ENCODE measurements at regions of chr1 and their contacts with region 1.

Region 1: DNA sequence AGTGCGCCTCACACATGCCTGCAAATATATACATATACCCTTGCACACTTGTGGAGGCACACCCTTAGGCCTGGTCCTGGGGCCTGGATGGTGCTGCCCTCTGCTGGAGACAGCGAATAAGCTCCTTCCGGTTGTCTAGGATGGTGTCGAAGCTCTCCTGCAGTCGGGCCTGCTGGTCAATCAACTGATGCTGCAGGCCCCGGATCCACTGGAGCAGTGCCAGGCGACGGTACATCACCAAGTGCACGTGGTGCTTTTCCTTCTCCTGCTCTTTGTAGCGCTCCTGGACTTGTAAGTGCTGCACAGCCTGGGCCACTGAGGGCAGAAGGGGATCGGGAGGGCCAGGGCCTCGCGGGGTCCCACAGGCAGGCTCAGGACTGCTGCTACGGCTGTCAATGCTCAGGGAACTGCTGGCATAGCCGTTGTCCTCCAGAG is 3.1 kb downstream of the C1orf216 start:
- DNase-seq: peak in 1 of 2 experiments; percentile 88
- H3K4me3 ChIP-seq: no peak overlapping the region
- H3K27ac ChIP-seq: no peak overlapping the region
- H3K4me1 ChIP-seq: peaks cover 3 to 9% (median 4%) of the 10 kb centered on the region in 4 experiments; a peak in 6 of 7 replicates
- H3K27me3 ChIP-seq: no peaks in the 10 kb centered on the region
- CTCF ChIP-seq: peak; percentile 89 to 95 (median 93)
- EP300 ChIP-seq: no peak
- POLR2A ChIP-seq: no peak
- RAD21 ChIP-seq: peak; percentile 85 to 91

Region 2: DNA sequence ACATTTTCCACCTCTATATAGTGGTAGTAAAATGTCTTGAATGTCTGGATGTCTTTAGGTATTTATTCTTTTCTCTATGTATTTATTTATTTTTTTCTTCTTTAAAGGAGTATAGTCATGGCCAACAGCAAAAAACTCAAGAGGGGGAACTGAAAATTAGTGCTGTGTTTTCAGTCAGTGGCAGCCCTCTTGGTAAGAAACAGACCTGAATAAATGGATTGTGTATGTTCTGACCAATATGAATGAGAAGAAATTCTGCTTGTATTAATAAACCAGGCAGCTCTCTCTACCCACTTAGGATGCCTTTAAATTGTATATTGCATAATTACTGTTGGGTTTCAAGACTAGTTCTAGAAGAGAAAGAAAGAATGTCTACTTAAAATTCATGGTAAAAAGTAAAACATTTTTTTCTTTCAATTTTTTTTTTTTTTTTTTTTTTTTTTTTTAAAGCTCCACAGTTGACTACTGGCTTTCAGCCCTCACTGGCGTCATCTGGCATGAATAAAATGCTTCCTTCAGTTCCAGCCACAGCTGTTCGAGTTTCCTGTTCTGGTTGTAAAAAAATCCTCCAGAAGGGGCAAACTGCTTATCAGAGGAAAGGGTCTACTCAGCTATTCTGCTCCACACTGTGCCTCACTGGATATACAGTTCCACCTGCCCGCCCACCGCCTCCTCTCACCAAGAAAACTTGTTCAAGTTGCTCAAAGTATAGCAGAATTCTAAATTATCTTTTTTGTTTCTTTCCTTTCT is 345.5 kb before region 1 on chr1:
- CTCF ChIA-PET with region 1: no interaction called
- POLR2A ChIA-PET with region 1: no interaction called
- DNase-seq: no peak
- H3K4me3 ChIP-seq: no peak overlapping the region
- H3K27ac ChIP-seq: no peak overlapping the region
- H3K4me1 ChIP-seq: no peaks in the 10 kb centered on the region
- H3K27me3 ChIP-seq: no peaks in the 10 kb centered on the region
- CTCF ChIP-seq: no peak
- EP300 ChIP-seq: no peak
- POLR2A ChIP-seq: no peak
- RAD21 ChIP-seq: no peak

Region 3: GRCh38 chr1:35577071-35577998 is 138.2 kb before region 1 on chr1:
- CTCF ChIA-PET with region 1: interaction called, 81 read pairs
- POLR2A ChIA-PET with region 1: interaction called, 7 read pairs
- DNase-seq: peak in 1 of 2 experiments; percentile 79
- H3K4me3 ChIP-seq: peak overlapping the region; percentile 30 to 58 (median 46)
- H3K27ac ChIP-seq: no peak overlapping the region
- H3K4me1 ChIP-seq: peaks cover 7 to 20% (median 15%) of the 10 kb centered on the region in 4 experiments
- H3K27me3 ChIP-seq: peaks cover 60 to 69% (median 67%) of the 10 kb centered on the region in 4 experiments
- CTCF ChIP-seq: no peak
- EP300 ChIP-seq: no peak
- POLR2A ChIP-seq: no peak
- RAD21 ChIP-seq: no peak

Region 4: DNA sequence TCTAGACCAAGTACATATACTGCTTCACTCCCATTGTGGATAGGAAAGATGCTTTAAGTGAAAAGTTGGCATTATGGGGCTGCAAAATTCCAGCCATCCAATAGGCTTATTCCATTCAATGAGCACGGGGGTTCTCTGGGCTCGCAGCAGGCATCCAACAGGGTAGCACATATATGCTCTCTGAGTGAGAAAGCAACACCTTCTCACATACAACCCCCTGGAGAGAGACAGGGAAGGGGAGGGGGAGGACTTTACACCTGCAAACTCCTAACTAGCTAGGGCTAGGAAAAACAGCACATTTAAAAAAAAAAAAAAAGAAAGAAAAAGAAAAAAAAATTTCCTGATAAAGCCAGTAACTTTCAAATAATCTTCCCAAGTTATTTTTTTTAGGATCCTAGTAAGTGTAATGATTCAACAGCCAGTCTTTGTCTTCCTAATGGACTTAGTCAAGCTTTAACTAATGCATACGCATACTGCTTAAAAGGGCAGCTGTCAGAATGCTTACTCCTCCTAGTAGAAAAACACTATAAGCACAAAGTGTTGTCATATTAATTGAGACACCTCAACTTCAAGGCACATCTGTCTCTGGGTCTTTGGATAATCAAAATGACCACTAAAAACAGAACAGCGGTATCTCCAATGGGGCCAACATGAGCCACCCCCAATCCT is 92.9 kb before region 1 on chr1:
- CTCF ChIA-PET with region 1: interaction called, 20 read pairs
- POLR2A ChIA-PET with region 1: no interaction called
- DNase-seq: no peak
- H3K4me3 ChIP-seq: no peak overlapping the region
- H3K27ac ChIP-seq: no peak overlapping the region
- H3K4me1 ChIP-seq: peaks cover 7 to 17% (median 13%) of the 10 kb centered on the region in 4 experiments
- H3K27me3 ChIP-seq: no peaks in the 10 kb centered on the region
- CTCF ChIP-seq: no peak
- EP300 ChIP-seq: no peak
- POLR2A ChIP-seq: no peak
- RAD21 ChIP-seq: no peak

Region 5: DNA sequence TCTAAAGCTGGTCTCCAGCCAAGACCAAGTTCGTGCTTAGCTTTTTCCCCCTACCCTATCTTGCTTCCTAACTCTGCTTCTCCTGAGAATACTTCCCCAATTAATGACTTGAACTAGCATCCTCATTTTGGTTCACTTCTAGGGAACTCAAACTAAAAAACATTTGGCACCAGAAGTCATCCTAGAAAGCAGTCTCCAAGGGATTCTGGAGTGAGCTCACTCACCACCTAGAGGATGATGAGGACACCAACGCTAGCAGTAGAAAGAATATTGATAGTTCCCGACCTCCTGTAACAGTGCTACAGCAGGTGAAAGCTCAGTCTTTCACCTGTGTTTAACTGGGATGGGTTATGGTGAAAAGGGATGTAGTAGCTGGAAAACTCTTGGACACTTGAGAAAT is 69.5 kb before region 1 on chr1:
- CTCF ChIA-PET with region 1: interaction called, 26 read pairs
- POLR2A ChIA-PET with region 1: interaction called, 3 read pairs
- DNase-seq: no peak
- H3K4me3 ChIP-seq: no peak overlapping the region
- H3K27ac ChIP-seq: no peak overlapping the region
- H3K4me1 ChIP-seq: no peaks in the 10 kb centered on the region
- H3K27me3 ChIP-seq: no peaks in the 10 kb centered on the region
- CTCF ChIP-seq: peak in 2 of 3 experiments; percentile 23 to 48; a peak in 1 of 4 replicates
- EP300 ChIP-seq: no peak
- POLR2A ChIP-seq: no peak
- RAD21 ChIP-seq: peak; percentile 32 to 48

Region 6: DNA sequence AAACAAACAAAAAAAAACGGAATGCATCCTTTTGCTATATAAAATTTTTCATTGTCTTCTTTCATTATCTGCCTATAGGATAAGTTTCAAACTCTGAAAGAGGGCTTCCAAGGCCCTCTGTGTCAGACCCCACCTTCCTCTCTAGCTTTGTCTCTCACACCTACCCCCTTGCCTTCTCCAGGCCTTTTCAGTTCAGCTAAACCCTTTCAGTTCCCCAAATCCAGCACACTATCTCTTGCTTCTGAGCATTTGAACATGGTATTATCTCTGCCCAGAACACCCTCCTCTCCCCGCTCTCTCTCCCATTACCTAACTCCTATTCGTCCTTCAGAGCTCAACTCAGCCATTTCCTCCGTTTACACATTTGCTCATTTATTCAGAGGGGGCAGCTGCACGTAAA is 32.6 kb before region 1 on chr1:
- CTCF ChIA-PET with region 1: interaction called, 18 read pairs
- POLR2A ChIA-PET with region 1: no interaction called
- DNase-seq: no peak
- H3K4me3 ChIP-seq: no peak overlapping the region
- H3K27ac ChIP-seq: no peak overlapping the region
- H3K4me1 ChIP-seq: no peaks in the 10 kb centered on the region
- H3K27me3 ChIP-seq: no peaks in the 10 kb centered on the region
- CTCF ChIP-seq: no peak
- EP300 ChIP-seq: no peak
- POLR2A ChIP-seq: no peak
- RAD21 ChIP-seq: no peak

Region 7: DNA sequence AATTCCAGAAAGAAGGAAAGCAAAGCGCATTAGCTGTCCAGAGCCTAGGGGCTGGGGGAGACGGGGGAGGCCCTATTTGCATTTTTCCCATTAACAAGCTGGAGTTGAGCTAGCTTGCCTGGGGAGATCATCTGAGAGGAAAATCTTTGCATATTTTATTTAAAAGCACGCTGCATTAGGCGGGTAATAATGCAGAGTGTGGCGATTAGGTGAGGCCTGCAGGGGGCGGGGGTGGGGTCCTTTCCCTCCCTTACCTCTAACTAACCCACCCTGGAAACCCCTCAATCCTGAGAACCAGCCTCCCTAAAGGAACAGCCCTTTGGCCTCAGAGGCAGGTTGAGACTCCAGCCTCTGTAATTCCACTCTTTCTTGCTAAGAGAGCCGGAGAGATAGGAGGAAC is 13.1 kb before region 1 on chr1:
- CTCF ChIA-PET with region 1: interaction called, 115 read pairs
- POLR2A ChIA-PET with region 1: interaction called, 41 read pairs
- DNase-seq: no peak
- H3K4me3 ChIP-seq: peak overlapping the region in 3 of 4 experiments; percentile 13 to 45 (median 32); a peak in 3 of 8 replicates
- H3K27ac ChIP-seq: no peak overlapping the region
- H3K4me1 ChIP-seq: peaks cover 8 to 19% (median 11%) of the 10 kb centered on the region in 4 experiments
- H3K27me3 ChIP-seq: peaks cover 0 to 4% (median 3%) of the 10 kb centered on the region in 4 experiments; a peak in 4 of 7 replicates
- CTCF ChIP-seq: peak; percentile 30 to 41 (median 32)
- EP300 ChIP-seq: no peak
- POLR2A ChIP-seq: no peak
- RAD21 ChIP-seq: peak in 1 of 2 experiments; percentile 21; a peak in 2 of 4 replicates

Region 8: DNA sequence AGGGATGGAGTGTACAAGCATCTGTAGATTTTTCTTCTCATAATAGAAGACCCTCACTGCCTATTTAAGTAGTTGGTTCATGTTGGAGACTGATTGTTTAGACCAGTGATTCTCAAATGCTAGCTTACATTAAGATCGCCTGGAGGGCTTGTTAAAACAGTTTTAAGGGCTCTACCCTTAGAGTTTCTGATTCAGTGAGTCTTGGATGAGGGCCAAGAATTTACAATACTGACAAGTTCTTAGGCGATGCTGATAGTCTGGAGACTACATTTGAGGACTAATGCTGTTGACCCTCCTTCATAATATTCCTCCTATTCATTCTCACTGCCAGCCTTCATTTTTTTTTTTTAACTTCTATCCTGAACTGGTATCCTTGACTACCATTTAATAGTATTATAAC is 200.1 kb after region 1 on chr1:
- CTCF ChIA-PET with region 1: no interaction called
- POLR2A ChIA-PET with region 1: no interaction called
- DNase-seq: no peak
- H3K4me3 ChIP-seq: no peak overlapping the region
- H3K27ac ChIP-seq: no peak overlapping the region
- H3K4me1 ChIP-seq: no peaks in the 10 kb centered on the region
- H3K27me3 ChIP-seq: no peaks in the 10 kb centered on the region; a peak in 1 of 7 replicates
- CTCF ChIP-seq: no peak
- EP300 ChIP-seq: no peak
- POLR2A ChIP-seq: no peak
- RAD21 ChIP-seq: no peak